ENCODE measurements at regions of chr11 and their contacts with region 1.

Region 1: DNA sequence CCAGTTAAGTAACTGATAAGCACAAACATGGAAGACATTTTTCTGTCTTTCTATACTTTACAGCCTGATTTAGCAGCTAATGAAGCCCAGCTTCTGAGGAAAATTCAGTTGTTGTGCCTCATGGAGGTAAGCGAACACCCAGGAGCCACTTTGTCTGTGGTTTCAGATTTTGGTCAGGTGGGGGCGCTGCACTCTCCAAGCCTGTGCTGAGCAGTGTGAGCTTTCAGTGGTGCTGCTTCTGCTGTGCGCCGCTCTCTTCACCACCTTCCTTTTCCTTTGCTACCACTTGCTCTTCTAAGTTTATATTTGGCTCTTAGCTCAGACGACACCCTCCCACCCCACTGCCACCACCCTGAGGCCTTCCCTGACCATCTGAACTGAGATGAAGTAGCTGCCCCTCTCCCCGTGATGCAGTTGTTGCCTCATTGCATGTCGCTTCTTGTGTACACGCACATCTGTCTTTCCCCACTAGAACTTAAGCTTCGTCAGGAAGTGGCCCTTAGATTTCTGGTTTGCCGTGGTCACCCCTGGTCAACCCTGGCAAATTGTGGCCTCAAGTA is 14.0 kb downstream of the PSMD13 start:
- DNase-seq: peak; percentile 89
- H3K4me3 Mint-ChIP-seq: no peak overlapping the region
- H3K27ac Mint-ChIP-seq: peak overlapping the region; percentile 81
- H3K4me1 Mint-ChIP-seq: peaks cover 17% of the 10 kb centered on the region
- H3K27me3 Mint-ChIP-seq: no peaks in the 10 kb centered on the region

Region 2: GRCh38 chr11:236774-237767 is 13.7 kb before region 1 on chr11 and contains the start of gene PSMD13:
- CTCF ChIA-PET with region 1: interaction called, 14 read pairs
- POLR2A ChIA-PET with region 1: no interaction called
- DNase-seq: peak; percentile 90
- H3K4me3 Mint-ChIP-seq: peak within 1 kb of the TSS; percentile 97
- H3K27ac Mint-ChIP-seq: peak within 1 kb of the TSS; percentile 99
- H3K4me1 Mint-ChIP-seq: peaks cover 47% of the 10 kb centered on the region
- H3K27me3 Mint-ChIP-seq: no peaks in the 10 kb centered on the region
- total RNA-seq, gene PSMD13: 125 to 153 TPM

Region 3: DNA sequence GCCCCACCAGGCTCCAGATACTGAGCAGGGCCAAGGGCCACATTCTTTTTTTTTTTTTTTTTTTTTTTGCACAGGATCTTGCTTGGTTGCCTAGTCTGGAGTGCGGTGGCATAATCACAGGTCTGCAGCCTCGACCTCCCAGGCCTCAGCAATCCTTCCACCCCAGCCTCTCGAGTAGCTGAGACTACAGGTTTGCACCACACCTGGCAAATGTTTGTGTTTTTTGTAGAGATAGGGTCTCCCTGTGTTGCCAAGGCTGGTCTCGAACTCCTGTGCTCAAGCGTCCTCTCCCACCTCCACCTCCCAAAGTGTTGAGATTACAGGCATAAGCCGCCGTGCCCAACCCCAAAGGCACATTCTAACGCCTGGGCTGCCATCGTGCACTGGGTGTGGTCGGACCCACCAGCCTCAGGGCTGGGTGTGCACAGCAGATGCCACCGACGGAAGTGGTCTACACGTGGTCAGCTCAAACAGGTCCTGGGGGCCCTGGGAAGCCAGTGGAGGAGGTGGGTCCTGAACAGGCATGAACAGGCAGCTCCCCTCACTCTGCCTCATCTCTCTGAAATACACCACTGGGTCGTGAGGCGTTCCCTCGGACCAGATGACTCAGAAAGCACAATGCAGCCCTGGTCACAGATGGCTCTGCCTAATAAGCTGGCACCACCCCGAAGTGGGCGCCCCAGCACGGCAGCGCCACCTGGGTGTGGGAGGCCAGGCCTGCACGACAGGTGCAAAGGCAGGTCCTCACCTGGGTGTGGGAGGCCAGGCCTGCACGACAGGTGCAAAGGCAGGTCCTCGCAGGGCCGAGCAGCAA is 113.3 kb after region 1 on chr11:
- CTCF ChIA-PET with region 1: interaction called, 12 read pairs
- POLR2A ChIA-PET with region 1: no interaction called
- DNase-seq: peak; percentile 64
- H3K4me3 Mint-ChIP-seq: no peak overlapping the region
- H3K27ac Mint-ChIP-seq: peak overlapping the region; percentile 60
- H3K4me1 Mint-ChIP-seq: peaks cover 11% of the 10 kb centered on the region
- H3K27me3 Mint-ChIP-seq: peaks cover 31% of the 10 kb centered on the region

Measured in activated CD4-positive, alpha-beta T cell treated with anti-CD3 and anti-CD28 coated beads, Interleukin-2, amount 10 ng/mL, durations not matched to agents 7 days and 5 days (primary cell).